ENCODE measurements at regions of chr12 and their contacts with region 1.

Region 1: GRCh38 chr12:23039834-23040233 is 414.9 kb downstream of the ETNK1 start:
- DNase-seq: no peak
- ATAC-seq: no peak
- H3K4me3 Mint-ChIP-seq: no peak overlapping the region
- H3K27ac Mint-ChIP-seq: no peak overlapping the region
- H3K4me1 Mint-ChIP-seq: no peaks in the 10 kb centered on the region
- H3K27me3 Mint-ChIP-seq: no peaks in the 10 kb centered on the region

Region 2: GRCh38 chr12:23028158-23028802 is 11.6 kb before region 1 on chr12:
- CTCF ChIA-PET with region 1: no interaction called
- POLR2A ChIA-PET with region 1: no interaction called
- intact Hi-C with region 1: no loop called
- DNase-seq: no peak
- ATAC-seq: no peak
- H3K4me3 Mint-ChIP-seq: no peak overlapping the region
- H3K27ac Mint-ChIP-seq: no peak overlapping the region
- H3K4me1 Mint-ChIP-seq: no peaks in the 10 kb centered on the region
- H3K27me3 Mint-ChIP-seq: no peaks in the 10 kb centered on the region

Region 3: GRCh38 chr12:23055004-23055403 is 15.2 kb after region 1 on chr12:
- CTCF ChIA-PET with region 1: no interaction called
- POLR2A ChIA-PET with region 1: no interaction called
- intact Hi-C with region 1: loop called in 1 of 2 experiments (anchors 2 kb)
- DNase-seq: peak; percentile 8
- ATAC-seq: no peak
- H3K4me3 Mint-ChIP-seq: no peak overlapping the region
- H3K27ac Mint-ChIP-seq: no peak overlapping the region
- H3K4me1 Mint-ChIP-seq: no peaks in the 10 kb centered on the region
- H3K27me3 Mint-ChIP-seq: no peaks in the 10 kb centered on the region

Measured in activated CD4-positive, alpha-beta T cell treated with anti-CD3 and anti-CD28 coated beads for 36 hours (primary cell).